AG04450 (cell line): ENCODE measurements at regions of chr1 and their contacts with region 1.

Region 1: DNA sequence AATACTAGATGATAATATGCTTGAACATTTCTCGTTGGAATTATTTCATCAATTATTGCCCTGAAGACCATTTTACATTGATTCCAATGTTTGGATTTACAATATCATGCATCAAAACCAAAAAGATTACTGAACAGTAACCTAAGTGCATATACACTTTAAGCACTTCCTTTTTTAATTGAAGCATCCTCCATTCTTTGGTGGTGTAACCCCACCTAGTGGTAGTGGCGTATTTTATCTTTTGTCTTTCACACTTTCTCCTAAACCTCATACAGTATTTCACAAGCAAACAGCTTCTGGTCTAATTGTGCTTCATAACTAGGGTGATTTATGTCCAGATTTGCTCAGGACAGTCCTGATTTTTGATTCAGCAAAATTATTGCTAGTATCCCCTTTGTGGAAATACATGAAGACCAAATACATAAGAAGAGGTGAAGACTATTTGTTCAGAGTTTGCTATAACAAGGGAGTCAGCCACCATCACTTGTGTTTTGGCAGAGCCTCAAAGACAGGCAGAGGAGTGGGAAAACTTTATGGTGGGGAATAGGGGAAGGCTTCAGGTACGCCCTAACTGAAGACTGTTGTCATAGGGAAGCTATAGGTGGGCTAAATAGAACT is 3.4 kb upstream of the NVL start:
- DNase-seq: no peak
- H3K4me3 ChIP-seq: no peak overlapping the region
- H3K27ac ChIP-seq: no peak overlapping the region
- H3K27me3 ChIP-seq: no peaks in the 10 kb centered on the region
- CTCF ChIP-seq: peak; percentile 72

Region 2: GRCh38 chr1:224116131-224116530 is 217.3 kb before region 1 on chr1:
- CTCF ChIA-PET with region 1: interaction called, 74 read pairs
- POLR2A ChIA-PET with region 1: interaction called, 4 read pairs
- DNase-seq: peak; percentile 21
- H3K4me3 ChIP-seq: no peak overlapping the region; the same call in 1 of the 2 replicates
- H3K27ac ChIP-seq: no peak overlapping the region
- H3K27me3 ChIP-seq: no peaks in the 10 kb centered on the region
- CTCF ChIP-seq: peak; percentile 49

Region 3: GRCh38 chr1:224274970-224275626 is 58.3 kb before region 1 on chr1:
- CTCF ChIA-PET with region 1: no interaction called
- POLR2A ChIA-PET with region 1: no interaction called
- DNase-seq: no peak
- H3K4me3 ChIP-seq: no peak overlapping the region
- H3K27ac ChIP-seq: no peak overlapping the region
- H3K27me3 ChIP-seq: no peaks in the 10 kb centered on the region
- CTCF ChIP-seq: no peak

Region 4: GRCh38 chr1:224343679-224344078 is 10.3 kb after region 1 on chr1:
- CTCF ChIA-PET with region 1: interaction called, 12 read pairs
- POLR2A ChIA-PET with region 1: no interaction called
- DNase-seq: no peak
- H3K4me3 ChIP-seq: no peak overlapping the region
- H3K27ac ChIP-seq: no peak overlapping the region
- H3K27me3 ChIP-seq: peaks cover 2% of the 10 kb centered on the region
- CTCF ChIP-seq: no peak

Region 5: GRCh38 chr1:224623743-224624333 is 290.4 kb after region 1 on chr1:
- CTCF ChIA-PET with region 1: no interaction called
- POLR2A ChIA-PET with region 1: no interaction called
- DNase-seq: peak; percentile 74
- H3K4me3 ChIP-seq: no peak overlapping the region
- H3K27ac ChIP-seq: peak overlapping the region; percentile 90
- H3K27me3 ChIP-seq: peaks cover 3% of the 10 kb centered on the region
- CTCF ChIP-seq: no peak